Ascending aorta (tissue), 2 donors: ENCODE measurements at regions of chr13 and their contacts with region 1.

Region 1: DNA sequence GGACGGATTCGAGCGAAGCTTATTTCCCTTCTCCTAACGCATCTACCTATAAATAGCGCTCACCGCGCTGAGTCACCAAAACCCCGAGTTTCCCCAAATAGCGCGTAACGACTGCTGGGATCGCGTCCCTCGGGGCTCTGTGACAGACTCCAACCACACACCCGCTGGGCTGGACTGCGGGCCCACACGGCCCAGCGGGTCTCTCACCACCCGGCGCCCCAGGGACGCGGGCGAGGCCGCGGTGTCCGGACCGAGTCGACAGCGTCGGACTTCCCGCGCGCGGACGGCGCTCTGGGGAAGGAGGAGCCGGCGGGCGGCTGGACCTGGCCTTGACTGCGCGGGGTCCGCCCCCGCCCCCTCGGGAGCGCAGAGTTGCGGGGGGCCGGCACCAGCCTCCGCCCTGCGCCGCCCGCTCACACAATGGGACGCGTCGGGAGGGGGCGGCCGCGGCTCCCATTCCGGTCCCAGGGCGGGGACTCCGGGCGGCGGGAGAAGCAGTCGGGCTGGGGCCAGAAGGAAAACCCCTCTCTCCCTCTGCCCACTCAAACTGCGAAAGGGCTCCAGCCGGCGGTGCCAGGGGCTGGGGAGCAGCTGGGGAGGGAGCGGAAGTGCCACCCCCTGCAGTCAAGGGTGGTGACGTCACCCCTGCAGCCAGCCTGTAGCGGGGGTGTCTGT is 108.8 kb downstream of the KCNRG start:
- DNase-seq: peak; percentile 92 to 98
- H3K4me3 ChIP-seq: peak overlapping the region; percentile 76 to 90
- H3K27ac ChIP-seq: peak overlapping the region; percentile 100
- H3K4me1 ChIP-seq: peaks cover 0 to 20% of the 10 kb centered on the region in 2 donors
- H3K27me3 ChIP-seq: no peaks in the 10 kb centered on the region
- CTCF ChIP-seq: no peak

Region 2: DNA sequence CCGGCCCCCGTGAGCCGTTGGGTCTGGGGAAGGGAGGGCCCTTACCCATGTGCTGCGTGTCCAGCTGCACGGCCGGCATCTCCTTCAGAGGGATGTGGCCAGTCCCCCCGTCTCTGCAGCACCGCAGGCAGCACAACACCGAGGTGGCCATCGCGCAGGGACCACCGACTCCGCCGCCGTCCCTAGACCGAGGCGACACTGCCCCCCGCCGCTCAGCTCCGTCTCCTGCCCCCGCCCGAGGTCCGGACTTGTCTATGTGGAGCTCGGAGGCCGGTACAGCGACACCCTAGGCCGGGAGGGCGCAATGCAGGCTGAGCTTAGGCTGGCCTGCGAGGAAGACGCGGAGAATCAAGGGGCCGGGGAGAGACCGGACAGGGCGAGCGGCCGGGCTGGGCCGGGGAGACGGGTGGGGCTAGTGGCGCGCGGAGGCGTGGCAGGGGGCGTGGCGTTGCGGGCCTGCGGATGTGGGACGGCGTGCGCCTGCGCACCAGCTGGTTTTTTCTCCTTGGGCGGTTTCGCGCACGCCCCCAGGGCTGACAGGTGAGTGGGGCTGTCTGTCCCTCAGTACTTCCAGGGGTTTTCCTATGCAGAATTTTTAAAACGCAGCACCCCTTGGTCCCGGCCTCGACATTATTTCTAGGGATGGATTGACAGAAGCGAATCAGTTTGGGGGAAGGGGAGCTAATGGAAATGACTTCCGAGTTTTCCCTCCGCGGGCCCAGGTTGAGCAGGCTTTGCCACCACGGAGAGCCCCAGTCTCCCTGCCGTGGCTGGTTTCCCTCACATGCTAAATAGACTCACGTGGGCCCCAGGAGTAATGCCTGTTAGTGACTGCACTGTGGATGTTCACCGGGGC is 187.7 kb before region 1 on chr13 and contains the start of gene SPRYD7:
- intact Hi-C with region 1: loop called (anchors 2 kb)
- DNase-seq: peak; percentile 92 to 99
- H3K4me3 ChIP-seq: peak within 1 kb of the TSS; percentile 78 to 97
- H3K27ac ChIP-seq: peak within 1 kb of the TSS; percentile 78 to 93
- H3K4me1 ChIP-seq: peaks cover 0 to 17% of the 10 kb centered on the region in 2 donors
- H3K27me3 ChIP-seq: no peaks in the 10 kb centered on the region
- CTCF ChIP-seq: peak; percentile 89 to 97 (median 94)
- total RNA-seq, gene SPRYD7: 1.7 TPM

Region 3: DNA sequence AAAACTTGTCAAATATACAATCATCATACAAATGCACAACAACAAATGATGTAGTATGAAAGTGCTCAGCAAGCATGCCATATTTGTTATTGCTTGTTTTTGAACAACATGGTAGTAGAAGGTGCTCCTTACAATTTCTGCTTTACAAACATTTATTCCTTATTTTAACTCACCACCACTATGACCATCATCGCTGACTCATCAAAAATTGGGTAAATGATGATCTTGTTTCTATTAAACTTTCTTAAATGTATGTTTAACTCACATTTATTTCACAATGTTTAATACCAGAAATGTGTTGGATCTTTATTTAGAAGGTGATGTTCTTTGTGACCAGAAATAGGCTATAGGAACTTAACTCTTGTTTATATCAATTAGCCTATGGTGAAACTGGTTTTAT is 63.3 kb before region 1 on chr13:
- intact Hi-C with region 1: no loop called
- DNase-seq: no peak
- H3K4me3 ChIP-seq: no peak overlapping the region
- H3K27ac ChIP-seq: no peak overlapping the region
- H3K4me1 ChIP-seq: no peaks in the 10 kb centered on the region
- H3K27me3 ChIP-seq: no peaks in the 10 kb centered on the region
- CTCF ChIP-seq: no peak

Region 4: GRCh38 chr13:50094615-50095293 is 29.2 kb before region 1 on chr13:
- intact Hi-C with region 1: no loop called
- DNase-seq: no peak
- H3K4me3 ChIP-seq: no peak overlapping the region
- H3K27ac ChIP-seq: no peak overlapping the region
- H3K4me1 ChIP-seq: peaks cover 0 to 2% of the 10 kb centered on the region in 2 donors
- H3K27me3 ChIP-seq: no peaks in the 10 kb centered on the region
- CTCF ChIP-seq: no peak

Region 5: GRCh38 chr13:50421473-50422130 is 297.6 kb after region 1 on chr13:
- intact Hi-C with region 1: loop called (anchors 5 kb)
- DNase-seq: no peak
- H3K4me3 ChIP-seq: no peak overlapping the region
- H3K27ac ChIP-seq: peak overlapping the region; percentile 23 to 30
- H3K4me1 ChIP-seq: peaks cover 4 to 31% of the 10 kb centered on the region in 2 donors
- H3K27me3 ChIP-seq: no peaks in the 10 kb centered on the region
- CTCF ChIP-seq: no peak